ENCODE measurements at regions of chr17 and their contacts with region 1.

Region 1: GRCh38 chr17:1648963-1649843 is 463 bp downstream of the RILP start:
- DNase-seq: peak; percentile 94
- H3K4me3 Mint-ChIP-seq: peak overlapping the region; percentile 61
- H3K27ac Mint-ChIP-seq: peak overlapping the region; percentile 72
- H3K4me1 Mint-ChIP-seq: peaks cover 31% of the 10 kb centered on the region
- H3K27me3 Mint-ChIP-seq: no peaks in the 10 kb centered on the region

Region 2: GRCh38 chr17:1617620-1618174 is 31.5 kb before region 1 on chr17:
- CTCF ChIA-PET with region 1: no interaction called
- POLR2A ChIA-PET with region 1: no interaction called
- DNase-seq: no peak
- H3K4me3 Mint-ChIP-seq: no peak overlapping the region
- H3K27ac Mint-ChIP-seq: no peak overlapping the region
- H3K4me1 Mint-ChIP-seq: peaks cover 3% of the 10 kb centered on the region
- H3K27me3 Mint-ChIP-seq: no peaks in the 10 kb centered on the region

Region 3: GRCh38 chr17:1661045-1661444 is 11.8 kb after region 1 on chr17:
- CTCF ChIA-PET with region 1: interaction called, 29 read pairs
- POLR2A ChIA-PET with region 1: no interaction called
- DNase-seq: no peak
- H3K4me3 Mint-ChIP-seq: no peak overlapping the region
- H3K27ac Mint-ChIP-seq: no peak overlapping the region
- H3K4me1 Mint-ChIP-seq: peaks cover 1% of the 10 kb centered on the region
- H3K27me3 Mint-ChIP-seq: no peaks in the 10 kb centered on the region

Region 4: DNA sequence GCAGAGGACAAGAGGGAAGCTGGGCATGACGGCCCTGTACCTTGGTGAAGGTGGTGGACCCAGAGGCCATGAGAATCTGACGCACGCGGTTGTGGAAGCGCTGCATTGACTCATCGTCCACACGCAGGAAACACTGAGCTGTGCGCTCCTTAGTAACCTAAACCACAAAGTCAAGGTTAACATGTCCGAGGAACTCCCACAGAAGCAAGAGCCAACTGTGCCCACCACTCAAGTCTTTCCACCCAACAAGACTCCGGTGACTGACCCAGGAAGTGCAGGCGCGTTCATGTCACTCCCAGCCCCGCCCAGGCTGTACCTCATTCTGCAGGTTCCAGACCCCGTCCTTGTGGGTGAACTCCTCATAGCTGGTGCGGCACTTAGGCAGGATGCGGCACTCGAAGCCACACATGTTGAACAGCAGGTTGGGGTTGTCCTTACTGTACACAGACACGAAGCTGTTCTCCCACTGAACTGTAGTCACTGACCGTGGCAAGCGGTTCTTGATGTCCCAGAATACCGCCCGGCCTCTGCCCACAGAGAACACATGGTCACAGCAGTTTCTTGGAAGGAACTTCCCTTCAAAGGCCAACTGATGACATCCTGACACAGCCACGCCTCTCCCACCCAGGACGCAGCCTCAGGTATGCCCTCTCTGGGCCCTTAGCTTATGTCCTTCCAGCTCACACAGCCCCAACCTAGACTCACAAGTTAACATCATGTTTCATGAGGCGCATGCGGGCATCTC is 24.0 kb after region 1 on chr17:
- CTCF ChIA-PET with region 1: interaction called, 18 read pairs
- POLR2A ChIA-PET with region 1: interaction called, 3 read pairs
- DNase-seq: peak; percentile 20
- H3K4me3 Mint-ChIP-seq: no peak overlapping the region
- H3K27ac Mint-ChIP-seq: peak overlapping the region; percentile 34
- H3K4me1 Mint-ChIP-seq: peaks cover 13% of the 10 kb centered on the region
- H3K27me3 Mint-ChIP-seq: no peaks in the 10 kb centered on the region

Region 5: DNA sequence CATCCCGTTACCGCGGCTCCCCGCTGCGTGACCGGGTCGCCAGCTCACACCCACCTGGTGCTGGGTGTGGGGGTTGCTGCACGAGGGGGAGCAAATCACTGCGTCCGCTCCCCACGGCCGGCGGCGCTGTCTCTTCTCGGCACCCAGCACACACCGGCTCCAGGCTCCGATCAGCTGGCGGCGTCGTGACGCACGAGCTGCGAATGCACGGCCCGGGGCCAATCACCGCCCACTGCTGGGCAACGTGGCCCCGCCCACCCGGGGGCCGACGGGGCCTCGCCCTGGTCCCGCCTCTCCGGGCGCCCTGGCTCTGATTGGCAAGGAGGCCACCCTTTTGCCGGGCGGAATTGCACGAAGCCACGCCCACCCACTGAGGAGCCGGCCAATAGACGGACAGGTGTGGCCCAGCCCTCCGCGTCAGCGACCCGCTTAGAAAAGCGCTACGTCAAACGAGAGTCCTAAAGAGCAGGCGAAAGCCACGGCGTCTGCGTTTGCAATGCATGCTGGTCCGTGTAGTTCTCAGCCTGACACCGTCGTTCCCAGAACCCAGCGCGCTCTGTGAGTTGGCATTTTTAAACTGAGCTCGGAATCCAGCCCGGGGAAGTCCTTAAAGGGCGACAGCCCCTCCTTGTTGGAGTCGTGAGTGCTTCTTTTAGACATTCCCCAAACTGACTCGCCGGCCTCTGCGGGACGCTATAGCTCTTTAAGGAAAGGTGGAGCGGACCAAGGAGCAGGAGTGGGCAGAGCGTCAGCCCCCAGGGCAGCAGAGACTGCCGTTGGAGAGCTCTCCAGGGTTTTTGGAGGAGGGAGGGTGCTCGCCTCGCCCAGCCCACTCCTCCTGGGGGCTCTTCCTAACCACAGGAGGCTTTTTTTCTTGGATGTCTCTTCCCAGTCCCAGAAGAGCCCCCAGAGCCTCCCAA is 67.1 kb after region 1 on chr17:
- CTCF ChIA-PET with region 1: interaction called, 14 read pairs
- POLR2A ChIA-PET with region 1: no interaction called
- DNase-seq: peak; percentile 100
- H3K4me3 Mint-ChIP-seq: peak overlapping the region; percentile 97
- H3K27ac Mint-ChIP-seq: peak overlapping the region; percentile 92
- H3K4me1 Mint-ChIP-seq: peaks cover 42% of the 10 kb centered on the region
- H3K27me3 Mint-ChIP-seq: peaks cover 9% of the 10 kb centered on the region

Region 6: GRCh38 chr17:1752425-1753262 is 103.4 kb after region 1 on chr17:
- CTCF ChIA-PET with region 1: no interaction called
- POLR2A ChIA-PET with region 1: no interaction called
- DNase-seq: no peak
- H3K4me3 Mint-ChIP-seq: no peak overlapping the region
- H3K27ac Mint-ChIP-seq: no peak overlapping the region
- H3K4me1 Mint-ChIP-seq: peaks cover 4% of the 10 kb centered on the region
- H3K27me3 Mint-ChIP-seq: no peaks in the 10 kb centered on the region

Measured in activated CD4-positive, alpha-beta T cell treated with anti-CD3 and anti-CD28 coated beads, Interleukin-2, amount 10 ng/mL, durations not matched to agents 7 days and 5 days (primary cell).